Activated B cell treated with CpG ODN at 0.5 μM for 24 hours (primary cell): ENCODE measurements at regions of chr6 and their contacts with region 1.

Region 1: GRCh38 chr6:83192871-83193746 is at the starts of genes PGM3 and RWDD2A:
- DNase-seq: peak; percentile 91
- ATAC-seq: peak; percentile 97
- H3K4me3 Mint-ChIP-seq: peak within 1 kb of the TSS; percentile 96
- H3K27ac Mint-ChIP-seq: peak within 1 kb of the TSS; percentile 91
- H3K4me1 Mint-ChIP-seq: peaks cover 31% of the 10 kb centered on the region
- H3K27me3 Mint-ChIP-seq: no peaks in the 10 kb centered on the region
- CTCF ChIP-seq: no peak
- total RNA-seq, gene PGM3: 18.2 and 20.1 TPM in 2 replicates
- total RNA-seq, gene RWDD2A: 1.7 and 1.8 TPM in 2 replicates

Region 2: GRCh38 chr6:82247634-82248232 is 945.4 kb before region 1 on chr6 and contains the start of gene IBTK:
- CTCF ChIA-PET with region 1: no interaction called
- POLR2A ChIA-PET with region 1: interaction called, 4 read pairs
- intact Hi-C with region 1: loop called (anchors 1 kb)
- DNase-seq: peak; percentile 89
- ATAC-seq: peak; percentile 90
- H3K4me3 Mint-ChIP-seq: peak within 1 kb of the TSS; percentile 97
- H3K27ac Mint-ChIP-seq: peak within 1 kb of the TSS; percentile 93
- H3K4me1 Mint-ChIP-seq: peaks cover 33% of the 10 kb centered on the region
- H3K27me3 Mint-ChIP-seq: no peaks in the 10 kb centered on the region
- CTCF ChIP-seq: no peak
- total RNA-seq, gene IBTK: 25.6 and 30.1 TPM in 2 replicates

Region 3: DNA sequence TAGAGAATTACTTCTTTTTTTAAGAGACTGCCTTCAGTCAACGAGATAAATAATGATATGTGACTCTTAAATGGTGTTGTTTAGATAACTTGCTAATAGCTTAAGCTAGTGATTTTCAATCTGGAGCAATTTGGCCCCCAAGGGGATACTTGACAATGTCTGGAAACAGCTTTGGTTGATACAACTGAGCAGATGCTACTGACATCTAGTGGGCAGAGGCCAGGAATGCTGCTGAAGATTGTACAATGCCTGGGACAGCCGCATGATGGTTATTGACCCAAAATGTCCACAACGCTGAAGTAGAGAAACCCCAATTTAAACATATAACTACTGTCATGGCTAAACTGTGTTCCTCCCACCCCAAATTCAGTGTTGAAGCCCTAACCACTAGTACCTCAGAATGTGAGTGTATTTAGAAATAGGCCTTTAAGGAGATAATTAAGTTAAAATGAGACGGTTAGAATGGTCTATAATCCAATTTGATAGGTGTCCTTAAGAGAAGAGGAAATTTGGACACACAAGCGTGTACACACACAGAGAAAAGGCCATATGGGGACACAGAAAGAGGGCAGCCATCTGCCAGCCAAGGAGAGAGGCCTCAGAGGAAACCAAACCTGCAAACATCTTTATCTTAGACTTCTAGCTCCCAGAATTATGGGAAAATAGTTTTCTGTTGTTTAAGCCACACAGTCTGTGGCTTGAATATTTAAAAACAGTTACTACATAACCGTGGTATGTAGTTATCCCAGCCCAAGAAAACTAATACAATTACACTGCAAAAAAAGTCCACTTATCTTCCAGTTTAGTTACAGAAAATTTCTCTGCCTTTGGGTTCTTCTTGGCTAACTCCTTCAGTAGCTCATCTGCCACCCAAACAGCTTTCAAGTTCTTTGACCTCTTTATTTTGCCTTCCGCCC is 22.3 kb after region 1 on chr6:
- CTCF ChIA-PET with region 1: interaction called, 6 read pairs
- POLR2A ChIA-PET with region 1: no interaction called
- intact Hi-C with region 1: loop called (anchors 1 kb)
- DNase-seq: no peak
- ATAC-seq: peak; percentile 98
- H3K4me3 Mint-ChIP-seq: no peak overlapping the region
- H3K27ac Mint-ChIP-seq: no peak overlapping the region
- H3K4me1 Mint-ChIP-seq: no peaks in the 10 kb centered on the region
- H3K27me3 Mint-ChIP-seq: peaks cover 14% of the 10 kb centered on the region
- CTCF ChIP-seq: peak; percentile 64

Region 4: GRCh38 chr6:83252717-83253116 is 59.6 kb after region 1 on chr6:
- CTCF ChIA-PET with region 1: no interaction called
- POLR2A ChIA-PET with region 1: no interaction called
- intact Hi-C with region 1: no loop called
- DNase-seq: no peak
- ATAC-seq: no peak
- H3K4me3 Mint-ChIP-seq: no peak overlapping the region
- H3K27ac Mint-ChIP-seq: no peak overlapping the region
- H3K4me1 Mint-ChIP-seq: no peaks in the 10 kb centered on the region
- H3K27me3 Mint-ChIP-seq: peaks cover 7% of the 10 kb centered on the region
- CTCF ChIP-seq: no peak

Region 5: GRCh38 chr6:83311231-83311630 is 118.1 kb after region 1 on chr6:
- CTCF ChIA-PET with region 1: no interaction called
- POLR2A ChIA-PET with region 1: no interaction called
- intact Hi-C with region 1: no loop called
- DNase-seq: no peak
- ATAC-seq: no peak
- H3K4me3 Mint-ChIP-seq: no peak overlapping the region
- H3K27ac Mint-ChIP-seq: no peak overlapping the region
- H3K4me1 Mint-ChIP-seq: no peaks in the 10 kb centered on the region
- H3K27me3 Mint-ChIP-seq: no peaks in the 10 kb centered on the region
- CTCF ChIP-seq: no peak